Naive thymus-derived CD4-positive, alpha-beta T cell (primary cell): ENCODE measurements at regions of chrX and their contacts with region 1.

Region 1: GRCh38 chrX:15493118-15493962 is at the start of gene PIR:
- DNase-seq: peak in 8 of 9 donors; percentile 3 to 72 (median 16)
- ATAC-seq: peak; percentile 88
- H3K4me3 ChIP-seq: peak within 1 kb of the TSS; percentile 46
- H3K4me3 Mint-ChIP-seq: peak within 1 kb of the TSS; percentile 75 to 85 (median 82)
- H3K27ac ChIP-seq: no peak within 1 kb of the TSS
- H3K27ac Mint-ChIP-seq: peak within 1 kb of the TSS in 1 of 9 donors; percentile 58
- H3K4me1 ChIP-seq: no peaks in the 10 kb centered on the region
- H3K4me1 Mint-ChIP-seq: peaks cover 2 to 18% (median 9%) of the 10 kb centered on the region in 7 donors
- H3K27me3 ChIP-seq: no peaks in the 10 kb centered on the region
- H3K27me3 Mint-ChIP-seq: peaks cover 0 to 6% (median 4%) of the 10 kb centered on the region in 5 donors
- total RNA-seq, gene PIR: 0.49 to 4.6 (median 0.70) TPM in 3 of 5 experiments, not detected in the others

Region 2: DNA sequence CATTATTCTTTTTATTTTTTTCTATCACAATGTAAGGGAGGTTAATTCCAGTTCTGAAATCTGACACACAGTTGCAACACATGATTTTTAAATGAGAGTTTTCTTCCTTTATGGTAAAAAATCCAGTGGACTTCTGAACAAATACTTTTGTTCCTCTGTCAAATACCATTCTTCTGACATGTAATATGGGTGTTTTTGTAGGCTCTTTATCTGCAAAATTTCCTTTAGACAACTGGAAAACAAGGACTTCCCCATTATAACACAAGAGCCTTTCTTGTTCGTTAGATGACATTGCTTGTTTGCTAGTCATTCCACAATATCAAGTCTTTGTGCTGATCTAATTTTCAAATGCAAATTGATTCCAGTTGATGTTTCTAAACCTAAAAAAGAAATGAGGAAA is 628.1 kb before region 1 on chrX:
- CTCF ChIA-PET with region 1: no interaction called
- POLR2A ChIA-PET with region 1: no interaction called
- intact Hi-C with region 1: no loop called
- DNase-seq: no peak
- ATAC-seq: no peak
- H3K4me3 ChIP-seq: no peak overlapping the region
- H3K4me3 Mint-ChIP-seq: no peak overlapping the region
- H3K27ac ChIP-seq: no peak overlapping the region
- H3K27ac Mint-ChIP-seq: no peak overlapping the region
- H3K4me1 ChIP-seq: no peaks in the 10 kb centered on the region
- H3K4me1 Mint-ChIP-seq: peaks cover 0 to 7% (median 0%) of the 10 kb centered on the region in 7 donors
- H3K27me3 ChIP-seq: no peaks in the 10 kb centered on the region
- H3K27me3 Mint-ChIP-seq: no peaks in the 10 kb centered on the region

Region 3: DNA sequence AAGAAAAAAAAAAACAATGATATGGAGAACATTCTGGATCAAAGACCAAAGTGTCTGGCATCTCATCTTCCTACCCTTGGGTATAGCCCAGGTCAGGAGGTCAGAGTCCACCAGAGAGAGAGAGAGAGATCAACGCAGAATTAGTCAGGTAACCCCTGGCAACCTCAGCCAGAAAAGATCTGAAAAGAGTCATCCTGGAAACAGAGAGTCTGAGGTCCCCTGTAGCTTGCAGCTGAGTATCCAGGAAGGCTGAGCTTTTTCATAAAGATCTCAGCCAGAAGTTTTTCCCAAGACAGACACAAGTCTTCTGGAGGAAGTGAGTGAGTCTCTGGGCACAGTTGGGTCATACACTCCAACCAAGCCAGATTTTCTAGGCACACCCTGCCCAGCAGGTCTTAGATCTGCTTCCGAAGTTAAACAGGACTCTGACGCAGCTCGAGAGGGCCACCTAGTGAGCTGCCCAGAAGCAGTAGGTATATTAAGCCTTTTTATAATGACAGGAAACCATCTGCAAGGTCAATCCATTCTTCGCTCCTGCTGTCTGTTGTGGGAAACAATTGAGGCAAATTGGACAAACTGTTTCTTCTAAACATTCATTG is 71.7 kb after region 1 on chrX:
- CTCF ChIA-PET with region 1: no interaction called
- POLR2A ChIA-PET with region 1: no interaction called
- intact Hi-C with region 1: loop called (anchors 1 kb)
- DNase-seq: peak in 3 of 9 donors; percentile 3 to 7 (median 5)
- ATAC-seq: peak; percentile 50
- H3K4me3 ChIP-seq: no peak overlapping the region
- H3K4me3 Mint-ChIP-seq: no peak overlapping the region
- H3K27ac ChIP-seq: no peak overlapping the region
- H3K27ac Mint-ChIP-seq: no peak overlapping the region
- H3K4me1 ChIP-seq: no peaks in the 10 kb centered on the region
- H3K4me1 Mint-ChIP-seq: no peaks in the 10 kb centered on the region
- H3K27me3 ChIP-seq: no peaks in the 10 kb centered on the region
- H3K27me3 Mint-ChIP-seq: peaks cover 0 to 14% (median 5%) of the 10 kb centered on the region in 5 donors

Region 4: GRCh38 chrX:15645258-15645657 is 151.9 kb after region 1 on chrX:
- CTCF ChIA-PET with region 1: no interaction called
- POLR2A ChIA-PET with region 1: no interaction called
- intact Hi-C with region 1: loop called in 1 of 2 experiments (anchors 5 kb)
- DNase-seq: no peak
- ATAC-seq: no peak
- H3K4me3 ChIP-seq: no peak overlapping the region
- H3K4me3 Mint-ChIP-seq: no peak overlapping the region
- H3K27ac ChIP-seq: no peak overlapping the region
- H3K27ac Mint-ChIP-seq: peak overlapping the region in 3 of 9 donors; percentile 33 to 79 (median 65)
- H3K4me1 ChIP-seq: no peaks in the 10 kb centered on the region
- H3K4me1 Mint-ChIP-seq: peaks cover 4 to 24% (median 16%) of the 10 kb centered on the region in 7 donors
- H3K27me3 ChIP-seq: no peaks in the 10 kb centered on the region
- H3K27me3 Mint-ChIP-seq: peaks cover 0 to 7% (median 0%) of the 10 kb centered on the region in 5 donors

Region 5: GRCh38 chrX:15749642-15750610 is 256.6 kb after region 1 on chrX:
- CTCF ChIA-PET with region 1: no interaction called
- POLR2A ChIA-PET with region 1: no interaction called
- intact Hi-C with region 1: loop called in 1 of 2 experiments (anchors 10 kb)
- DNase-seq: peak in 7 of 9 donors; percentile 20 to 61 (median 52)
- ATAC-seq: peak; percentile 55
- H3K4me3 ChIP-seq: peak overlapping the region; percentile 43
- H3K4me3 Mint-ChIP-seq: peak overlapping the region; percentile 60 to 86 (median 77)
- H3K27ac ChIP-seq: peak overlapping the region; percentile 89
- H3K27ac Mint-ChIP-seq: peak overlapping the region; percentile 92 to 99 (median 97)
- H3K4me1 ChIP-seq: peaks cover 51 to 55% of the 10 kb centered on the region in 2 donors
- H3K4me1 Mint-ChIP-seq: peaks cover 36 to 97% (median 82%) of the 10 kb centered on the region in 7 donors
- H3K27me3 ChIP-seq: no peaks in the 10 kb centered on the region
- H3K27me3 Mint-ChIP-seq: no peaks in the 10 kb centered on the region

Region 6: DNA sequence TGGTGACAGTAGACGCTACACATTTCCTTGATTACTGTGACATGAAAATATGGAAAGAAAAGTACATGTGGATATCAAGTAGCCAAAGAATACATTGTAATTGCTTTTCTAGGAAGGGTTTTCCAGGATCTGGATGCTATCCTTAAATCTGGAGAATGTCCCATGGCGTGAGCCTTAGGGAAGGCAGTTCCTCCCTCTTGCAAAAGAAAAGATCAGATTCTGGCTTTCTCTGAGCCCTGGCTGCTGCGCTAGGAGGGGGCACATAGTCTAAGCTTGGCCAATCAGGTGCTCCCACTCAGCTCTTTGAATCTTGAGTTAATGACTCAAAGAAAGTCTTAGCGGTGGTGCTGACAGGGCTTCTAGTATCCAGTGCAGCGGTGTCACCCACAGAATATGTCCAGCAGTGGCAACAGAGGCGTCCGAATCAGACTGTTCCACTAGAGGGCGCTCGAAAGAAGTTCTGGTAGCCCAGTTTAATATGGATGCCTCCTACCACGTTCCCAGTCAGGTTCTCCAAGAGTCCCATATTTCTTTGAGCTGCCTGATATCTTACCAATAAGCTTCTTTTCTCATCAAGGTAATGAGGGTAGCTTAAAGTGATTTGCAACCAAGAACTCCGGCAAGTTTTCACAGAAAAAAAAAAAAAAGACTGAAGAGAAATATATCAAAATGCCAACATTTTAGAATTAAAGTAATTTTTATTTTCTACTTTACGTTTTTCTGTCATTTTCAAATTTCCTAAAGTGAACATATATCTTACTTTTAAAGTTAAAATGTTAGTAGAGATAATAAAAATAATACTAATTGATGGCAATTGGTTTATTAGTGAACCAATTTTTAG is 943.2 kb after region 1 on chrX:
- CTCF ChIA-PET with region 1: no interaction called
- POLR2A ChIA-PET with region 1: no interaction called
- intact Hi-C with region 1: loop called in 1 of 2 experiments (anchors 5 kb)
- DNase-seq: peak; percentile 19 to 55 (median 44)
- ATAC-seq: peak; percentile 78
- H3K4me3 ChIP-seq: no peak overlapping the region
- H3K4me3 Mint-ChIP-seq: peak overlapping the region in 1 of 10 donors; percentile 44
- H3K27ac ChIP-seq: no peak overlapping the region
- H3K27ac Mint-ChIP-seq: peak overlapping the region in 1 of 9 donors; percentile 0
- H3K4me1 ChIP-seq: peaks cover 0 to 15% of the 10 kb centered on the region in 2 donors
- H3K4me1 Mint-ChIP-seq: peaks cover 3 to 19% (median 15%) of the 10 kb centered on the region in 7 donors
- H3K27me3 ChIP-seq: no peaks in the 10 kb centered on the region
- H3K27me3 Mint-ChIP-seq: no peaks in the 10 kb centered on the region

Region 7: GRCh38 chrX:16695079-16695676 is 1201.8 kb after region 1 on chrX:
- CTCF ChIA-PET with region 1: no interaction called
- POLR2A ChIA-PET with region 1: no interaction called
- intact Hi-C with region 1: loop called in 1 of 2 experiments (anchors 1 kb)
- DNase-seq: peak in 8 of 9 donors; percentile 14 to 62 (median 46)
- ATAC-seq: peak; percentile 84
- H3K4me3 ChIP-seq: no peak overlapping the region
- H3K4me3 Mint-ChIP-seq: no peak overlapping the region
- H3K27ac ChIP-seq: no peak overlapping the region
- H3K27ac Mint-ChIP-seq: peak overlapping the region in 1 of 9 donors; percentile 56
- H3K4me1 ChIP-seq: no peaks in the 10 kb centered on the region
- H3K4me1 Mint-ChIP-seq: peaks cover 0 to 5% (median 0%) of the 10 kb centered on the region in 7 donors
- H3K27me3 ChIP-seq: no peaks in the 10 kb centered on the region
- H3K27me3 Mint-ChIP-seq: no peaks in the 10 kb centered on the region

Region 8: GRCh38 chrX:16892504-16893362 is 1399.4 kb after region 1 on chrX:
- CTCF ChIA-PET with region 1: no interaction called
- POLR2A ChIA-PET with region 1: no interaction called
- intact Hi-C with region 1: loop called in 1 of 2 experiments (anchors 5 kb)
- DNase-seq: peak in 8 of 9 donors; percentile 39 to 66 (median 57)
- ATAC-seq: peak; percentile 80
- H3K4me3 ChIP-seq: no peak overlapping the region
- H3K4me3 Mint-ChIP-seq: no peak overlapping the region
- H3K27ac ChIP-seq: no peak overlapping the region
- H3K27ac Mint-ChIP-seq: no peak overlapping the region
- H3K4me1 ChIP-seq: peaks cover 4 to 8% of the 10 kb centered on the region in 2 donors
- H3K4me1 Mint-ChIP-seq: peaks cover 5 to 19% (median 15%) of the 10 kb centered on the region in 7 donors
- H3K27me3 ChIP-seq: no peaks in the 10 kb centered on the region
- H3K27me3 Mint-ChIP-seq: peaks cover 0 to 18% (median 0%) of the 10 kb centered on the region in 5 donors